A673 (cell line): ENCODE measurements at regions of chr16 and their contacts with region 1.

Region 1: DNA sequence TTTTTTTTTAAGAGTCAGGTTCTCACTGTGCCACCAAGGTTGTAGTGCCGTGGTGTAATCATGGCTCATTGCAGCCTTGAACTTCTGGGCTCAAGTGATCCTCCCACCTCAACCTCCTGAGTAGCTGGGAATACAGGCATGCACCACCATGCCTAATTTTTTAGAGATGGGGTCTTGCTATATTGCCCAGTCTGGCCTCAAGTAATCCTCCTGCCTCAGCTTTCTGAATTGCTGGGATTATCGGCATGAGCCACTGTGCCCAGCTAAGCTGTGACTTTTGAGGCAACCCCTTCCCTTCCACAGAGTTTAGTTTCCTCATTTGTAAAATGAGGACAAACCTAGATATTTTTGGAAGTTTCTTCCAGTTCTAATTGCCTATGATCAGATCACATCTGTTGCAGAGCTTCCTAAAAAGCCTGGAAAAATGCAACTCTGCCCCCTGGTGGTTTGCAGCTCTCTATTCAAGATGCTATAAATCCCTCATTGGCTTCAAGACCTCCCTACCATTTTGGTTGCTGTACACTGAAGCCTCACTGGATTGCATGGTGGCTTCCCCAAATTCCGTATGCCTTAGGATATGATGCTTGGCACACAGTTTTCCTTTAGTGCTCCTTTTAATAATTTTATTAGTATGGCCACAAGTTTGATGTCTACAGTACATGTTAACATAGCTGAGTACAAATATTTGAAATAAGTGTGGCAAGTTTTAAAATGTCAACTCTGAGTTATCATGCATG is 19.3 kb downstream of the GDE1 start:
- DNase-seq: peak; percentile 82
- H3K4me3 ChIP-seq: no peak overlapping the region
- H3K27ac ChIP-seq: no peak overlapping the region
- H3K4me1 ChIP-seq: no peaks in the 10 kb centered on the region
- H3K27me3 ChIP-seq: no peaks in the 10 kb centered on the region
- CTCF ChIP-seq: peak; percentile 87

Region 2: DNA sequence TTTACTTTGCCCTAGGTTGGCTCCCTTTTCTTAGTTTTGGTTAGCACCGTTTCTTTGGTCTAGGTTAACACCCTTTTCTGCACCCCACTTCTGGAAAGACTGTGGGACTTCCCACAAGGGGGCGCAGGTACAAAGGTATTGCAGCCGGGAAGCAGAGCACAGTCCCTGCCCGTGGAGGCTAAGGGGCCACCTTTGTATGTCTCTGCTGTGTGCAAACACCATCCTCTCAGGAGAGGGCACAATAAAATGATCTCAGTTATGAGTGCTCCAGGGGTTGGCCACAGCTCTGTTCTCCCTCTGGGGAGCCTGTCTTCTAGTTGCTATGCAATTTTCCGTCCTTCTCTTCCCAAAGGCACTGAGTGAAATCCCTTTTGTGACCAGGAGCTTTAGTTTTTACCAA is 113.3 kb before region 1 on chr16:
- CTCF ChIA-PET with region 1: interaction called, 18 read pairs
- POLR2A ChIA-PET with region 1: no interaction called
- intact Hi-C with region 1: loop called (anchors 1 kb)
- DNase-seq: peak; percentile 53
- H3K4me3 ChIP-seq: no peak overlapping the region
- H3K27ac ChIP-seq: no peak overlapping the region
- H3K4me1 ChIP-seq: peaks cover 12% of the 10 kb centered on the region
- H3K27me3 ChIP-seq: no peaks in the 10 kb centered on the region
- CTCF ChIP-seq: peak; percentile 67

Region 3: GRCh38 chr16:19410435-19411161 is 92.0 kb before region 1 on chr16:
- CTCF ChIA-PET with region 1: no interaction called
- POLR2A ChIA-PET with region 1: interaction called, 11 read pairs
- intact Hi-C with region 1: no loop called
- DNase-seq: peak; percentile 36
- H3K4me3 ChIP-seq: peak overlapping the region; percentile 49
- H3K27ac ChIP-seq: no peak overlapping the region
- H3K4me1 ChIP-seq: no peaks in the 10 kb centered on the region
- H3K27me3 ChIP-seq: peaks cover 16% of the 10 kb centered on the region
- CTCF ChIP-seq: peak; percentile 53